B cell (primary cell): ENCODE measurements at regions of chr1 and their contacts with region 1.

Region 1: GRCh38 chr1:25819576-25820246 is at the start of gene MTFR1L:
- DNase-seq: peak; percentile 94
- ATAC-seq: peak; percentile 93
- H3K4me3 ChIP-seq: peak within 1 kb of the TSS; percentile 66 to 99 (median 84)
- H3K4me3 Mint-ChIP-seq: peak within 1 kb of the TSS; percentile 95
- H3K27ac ChIP-seq: peak within 1 kb of the TSS; percentile 76 to 84
- H3K27ac Mint-ChIP-seq: peak within 1 kb of the TSS; percentile 94
- H3K4me1 ChIP-seq: peaks cover 18 to 24% of the 10 kb centered on the region in 2 donors
- H3K4me1 Mint-ChIP-seq: peaks cover 29% of the 10 kb centered on the region
- H3K27me3 ChIP-seq: no peaks in the 10 kb centered on the region
- H3K27me3 Mint-ChIP-seq: no peaks in the 10 kb centered on the region
- CTCF ChIP-seq: no peak
- total RNA-seq, gene MTFR1L: 40.9 and 41.5 TPM in 2 replicates

Region 2: GRCh38 chr1:25616095-25616986 is 203.4 kb before region 1 on chr1 and contains the start of gene MAN1C1:
- CTCF ChIA-PET with region 1: no interaction called
- POLR2A ChIA-PET with region 1: no interaction called
- intact Hi-C with region 1: loop called (anchors 1 kb)
- DNase-seq: peak; percentile 88
- ATAC-seq: peak; percentile 92
- H3K4me3 ChIP-seq: peak within 1 kb of the TSS in 4 of 5 experiments; percentile 69 to 78 (median 74)
- H3K4me3 Mint-ChIP-seq: peak within 1 kb of the TSS; percentile 87
- H3K27ac ChIP-seq: no peak within 1 kb of the TSS
- H3K27ac Mint-ChIP-seq: peak within 1 kb of the TSS; percentile 69
- H3K4me1 ChIP-seq: peaks cover 8 to 22% of the 10 kb centered on the region in 2 donors
- H3K4me1 Mint-ChIP-seq: peaks cover 23% of the 10 kb centered on the region
- H3K27me3 ChIP-seq: peaks cover 0 to 45% (median 24%) of the 10 kb centered on the region in 4 experiments
- H3K27me3 Mint-ChIP-seq: peaks cover 43% of the 10 kb centered on the region
- CTCF ChIP-seq: peak; percentile 38
- total RNA-seq, gene MAN1C1: 0.70 and 0.89 TPM in 2 replicates

Region 3: GRCh38 chr1:25987951-25988350 is 168.2 kb after region 1 on chr1:
- CTCF ChIA-PET with region 1: no interaction called
- POLR2A ChIA-PET with region 1: no interaction called
- intact Hi-C with region 1: no loop called
- DNase-seq: no peak
- ATAC-seq: no peak
- H3K4me3 ChIP-seq: no peak overlapping the region
- H3K4me3 Mint-ChIP-seq: no peak overlapping the region
- H3K27ac ChIP-seq: no peak overlapping the region
- H3K27ac Mint-ChIP-seq: no peak overlapping the region
- H3K4me1 ChIP-seq: peaks cover 8 to 11% of the 10 kb centered on the region in 2 donors
- H3K4me1 Mint-ChIP-seq: peaks cover 11% of the 10 kb centered on the region
- H3K27me3 ChIP-seq: no peaks in the 10 kb centered on the region
- H3K27me3 Mint-ChIP-seq: no peaks in the 10 kb centered on the region
- CTCF ChIP-seq: no peak